ENCODE measurements at regions of chr19 and their contacts with region 1.

Region 1: GRCh38 chr19:34639491-34640085 is 37.4 kb downstream of the SCGB2B2 start:
- DNase-seq: peak; percentile 53
- H3K4me3 ChIP-seq: no peak overlapping the region
- H3K27ac ChIP-seq: no peak overlapping the region
- H3K4me1 ChIP-seq: no peaks in the 10 kb centered on the region
- H3K27me3 ChIP-seq: peaks cover 1 to 4% of the 10 kb centered on the region in 2 experiments
- CTCF ChIP-seq: peak; percentile 62 to 74
- POLR2A ChIP-seq: no peak

Region 2: GRCh38 chr19:34501339-34502320 is 138.0 kb before region 1 on chr19:
- CTCF ChIA-PET with region 1: no interaction called
- POLR2A ChIA-PET with region 1: no interaction called
- dilution Hi-C with region 1: no loop called
- intact Hi-C with region 1: loop called (anchors 1 kb)
- DNase-seq: peak; percentile 91
- H3K4me3 ChIP-seq: no peak overlapping the region
- H3K27ac ChIP-seq: no peak overlapping the region
- H3K4me1 ChIP-seq: no peaks in the 10 kb centered on the region
- H3K27me3 ChIP-seq: no peaks in the 10 kb centered on the region
- CTCF ChIP-seq: peak; percentile 100
- POLR2A ChIP-seq: no peak

Region 3: GRCh38 chr19:34649886-34650543 is 10.4 kb after region 1 on chr19:
- CTCF ChIA-PET with region 1: interaction called, 10 read pairs
- POLR2A ChIA-PET with region 1: no interaction called
- dilution Hi-C with region 1: no loop called
- intact Hi-C with region 1: no loop called
- DNase-seq: no peak
- H3K4me3 ChIP-seq: no peak overlapping the region
- H3K27ac ChIP-seq: no peak overlapping the region
- H3K4me1 ChIP-seq: no peaks in the 10 kb centered on the region
- H3K27me3 ChIP-seq: no peaks in the 10 kb centered on the region
- CTCF ChIP-seq: no peak
- POLR2A ChIP-seq: no peak

Region 4: DNA sequence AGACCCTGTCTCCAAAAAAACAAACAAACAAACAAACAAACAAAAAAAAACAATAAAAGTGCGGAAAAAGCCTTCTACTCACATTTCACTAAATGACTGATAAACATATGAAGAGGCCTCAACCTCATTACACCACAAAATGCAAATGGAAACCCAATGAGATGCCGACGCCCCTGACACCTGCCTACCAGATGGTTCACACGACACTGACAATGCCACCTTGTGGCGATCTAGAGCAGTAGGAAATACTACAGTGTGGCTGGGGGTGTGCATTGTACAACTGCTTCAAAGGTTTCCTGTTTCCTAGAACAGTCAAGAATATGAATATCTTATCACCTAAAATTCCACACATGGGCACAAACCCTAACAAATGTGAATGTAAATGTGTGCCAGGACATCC is 23.3 kb after region 1 on chr19:
- CTCF ChIA-PET with region 1: interaction called, 9 read pairs
- POLR2A ChIA-PET with region 1: no interaction called
- dilution Hi-C with region 1: no loop called
- intact Hi-C with region 1: loop called (anchors 1 kb)
- DNase-seq: peak; percentile 29
- H3K4me3 ChIP-seq: no peak overlapping the region
- H3K27ac ChIP-seq: no peak overlapping the region
- H3K4me1 ChIP-seq: no peaks in the 10 kb centered on the region
- H3K27me3 ChIP-seq: no peaks in the 10 kb centered on the region
- CTCF ChIP-seq: peak; percentile 34 to 36
- POLR2A ChIP-seq: no peak

Region 5: DNA sequence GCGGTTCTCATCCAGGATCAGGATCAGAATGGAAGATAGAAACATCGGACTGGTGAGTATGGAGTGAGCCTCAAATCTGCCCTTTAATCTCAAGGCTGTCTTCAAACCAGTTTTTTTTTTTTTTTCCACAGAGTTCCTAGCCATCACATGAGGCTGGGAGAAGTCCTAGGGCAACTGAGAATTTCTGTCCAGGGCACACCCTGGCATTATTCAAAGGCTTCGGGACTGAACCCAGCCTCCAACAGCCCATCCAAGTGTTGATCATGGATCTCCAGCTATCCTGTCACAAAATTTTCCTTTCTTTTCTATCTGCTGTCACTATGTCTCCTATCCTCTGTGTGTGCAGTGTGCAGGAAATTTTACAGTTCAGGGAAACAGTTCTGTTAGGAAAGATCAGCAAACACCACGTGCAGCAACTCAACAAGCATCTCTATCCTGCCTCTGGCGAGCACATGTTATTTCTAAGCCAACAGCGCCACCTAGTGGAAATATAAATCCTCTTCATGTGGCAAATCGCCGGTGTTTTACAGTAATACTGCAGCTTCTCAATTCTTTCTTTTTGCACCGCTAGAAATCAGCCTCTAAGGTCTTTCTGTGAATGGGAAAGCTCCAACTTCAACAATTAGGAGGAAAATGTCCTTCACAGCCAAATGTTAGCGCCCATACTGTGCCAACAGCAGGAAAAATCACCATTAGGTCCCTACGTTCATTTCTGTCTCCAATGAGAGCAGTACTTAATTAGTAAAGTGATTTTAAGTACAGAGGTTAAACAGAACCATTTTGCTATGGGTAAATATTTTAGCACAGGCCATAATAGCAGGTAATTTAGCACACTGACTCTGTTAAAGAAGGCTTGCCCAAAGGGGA is 73.0 kb after region 1 on chr19:
- CTCF ChIA-PET with region 1: interaction called, 87 read pairs
- POLR2A ChIA-PET with region 1: no interaction called
- dilution Hi-C with region 1: no loop called
- intact Hi-C with region 1: loop called (anchors 1 kb)
- DNase-seq: peak; percentile 75
- H3K4me3 ChIP-seq: no peak overlapping the region
- H3K27ac ChIP-seq: no peak overlapping the region
- H3K4me1 ChIP-seq: no peaks in the 10 kb centered on the region
- H3K27me3 ChIP-seq: peaks cover 3% of the 10 kb centered on the region in 2 experiments
- CTCF ChIP-seq: peak; percentile 39 to 40
- POLR2A ChIP-seq: no peak

Measured in endothelial cell of umbilical vein (primary cell).